Heart right ventricle (tissue), 16 donors: ENCODE measurements at regions of chr20 and their contacts with region 1.

Region 1: DNA sequence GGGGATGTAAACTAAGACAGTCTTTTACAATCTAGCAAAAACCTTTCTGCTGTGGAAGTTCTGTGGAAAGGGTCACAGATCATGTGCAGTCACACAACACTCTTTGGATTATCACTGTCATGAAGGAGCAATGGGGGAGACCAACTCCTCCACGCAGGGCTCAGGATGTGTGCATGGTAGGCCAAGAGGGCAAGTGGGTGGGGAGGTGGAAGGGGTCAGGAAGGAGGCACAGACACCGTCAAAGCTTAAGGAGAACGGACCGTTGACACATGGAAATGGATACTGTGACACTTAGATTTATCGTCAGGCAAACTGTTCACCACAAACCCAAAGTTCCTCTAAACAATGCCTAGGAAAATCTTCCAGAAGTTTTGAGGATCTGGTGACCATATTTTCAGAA is 215.8 kb downstream of the PAX1 start:
- DNase-seq: no peak
- ATAC-seq: no peak
- H3K4me3 ChIP-seq: no peak overlapping the region
- H3K27ac ChIP-seq: no peak overlapping the region
- H3K4me1 ChIP-seq: no peaks in the 10 kb centered on the region
- H3K27me3 ChIP-seq: no peaks in the 10 kb centered on the region
- CTCF ChIP-seq: no peak

Region 2: GRCh38 chr20:21874127-21874526 is 47.1 kb before region 1 on chr20:
- intact Hi-C with region 1: loop called in 1 of 10 experiments (anchors 5 kb)
- DNase-seq: no peak
- ATAC-seq: no peak
- H3K4me3 ChIP-seq: no peak overlapping the region
- H3K27ac ChIP-seq: no peak overlapping the region
- H3K4me1 ChIP-seq: no peaks in the 10 kb centered on the region
- H3K27me3 ChIP-seq: no peaks in the 10 kb centered on the region
- CTCF ChIP-seq: no peak